ENCODE measurements at regions of chr15 and their contacts with region 1.

Region 1: GRCh38 chr15:39968273-39969001 is 34.5 kb downstream of the EIF2AK4 start:
- DNase-seq: no peak
- H3K4me3 Mint-ChIP-seq: no peak overlapping the region
- H3K27ac Mint-ChIP-seq: peak overlapping the region; percentile 63
- H3K4me1 Mint-ChIP-seq: peaks cover 34% of the 10 kb centered on the region
- H3K27me3 Mint-ChIP-seq: no peaks in the 10 kb centered on the region

Region 2: DNA sequence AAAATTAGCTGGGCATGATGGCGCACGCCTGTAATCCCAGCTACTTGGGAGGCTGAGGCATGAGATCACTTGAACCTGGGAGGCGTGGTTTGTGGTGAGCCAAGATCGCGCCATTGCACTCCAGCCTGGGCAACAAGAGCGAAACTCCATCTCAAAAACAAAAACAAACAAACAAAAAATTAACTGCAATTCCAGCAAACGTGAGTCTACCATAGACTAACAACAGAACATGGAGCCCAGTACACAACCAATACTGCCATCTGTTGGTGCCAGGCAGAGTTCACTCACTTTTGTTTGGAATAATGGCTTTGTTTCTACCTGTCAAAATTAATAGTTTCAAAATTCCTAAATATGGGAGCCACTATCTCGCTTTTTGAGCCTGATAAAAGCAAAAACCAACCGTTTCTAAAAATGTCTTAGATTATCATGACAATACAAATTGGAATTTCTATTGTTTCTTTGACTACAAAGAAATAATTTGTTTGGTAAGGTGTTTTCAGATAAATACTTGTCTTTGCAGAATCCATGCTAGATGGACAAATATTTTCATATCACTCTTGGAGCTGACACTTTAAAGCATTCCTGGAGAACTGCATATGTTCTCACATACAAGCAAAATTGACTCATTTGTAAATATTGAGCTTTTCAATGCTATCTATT is 93.4 kb before region 1 on chr15:
- intact Hi-C with region 1: no loop called
- DNase-seq: no peak
- H3K4me3 Mint-ChIP-seq: no peak overlapping the region
- H3K27ac Mint-ChIP-seq: no peak overlapping the region
- H3K4me1 Mint-ChIP-seq: no peaks in the 10 kb centered on the region
- H3K27me3 Mint-ChIP-seq: peaks cover 12% of the 10 kb centered on the region

Region 3: GRCh38 chr15:39946862-39947261 is 21.6 kb before region 1 on chr15:
- intact Hi-C with region 1: loop called (anchors 2 kb)
- DNase-seq: no peak
- H3K4me3 Mint-ChIP-seq: no peak overlapping the region
- H3K27ac Mint-ChIP-seq: no peak overlapping the region
- H3K4me1 Mint-ChIP-seq: peaks cover 38% of the 10 kb centered on the region
- H3K27me3 Mint-ChIP-seq: no peaks in the 10 kb centered on the region